Mucosa of descending colon (tissue), 3 donors: ENCODE measurements at regions of chr3 and their contacts with region 1.

Region 1: GRCh38 chr3:4826237-4827100 is 152.8 kb upstream of the BHLHE40 start:
- DNase-seq: peak; percentile 78 to 90 (median 82)
- ATAC-seq: peak; percentile 79
- H3K4me3 ChIP-seq: no peak overlapping the region
- H3K4me1 ChIP-seq: peaks cover 35% of the 10 kb centered on the region
- CTCF ChIP-seq: no peak

Region 2: GRCh38 chr3:4722103-4722502 is 104.4 kb before region 1 on chr3:
- intact Hi-C with region 1: loop called in 1 of 2 experiments (anchors 5 kb)
- DNase-seq: peak in 1 of 3 donors; percentile 64
- ATAC-seq: peak; percentile 81
- H3K4me3 ChIP-seq: no peak overlapping the region
- H3K4me1 ChIP-seq: peaks cover 12% of the 10 kb centered on the region
- CTCF ChIP-seq: no peak

Region 3: GRCh38 chr3:4978204-4978965 is 151.9 kb after region 1 on chr3:
- intact Hi-C with region 1: loop called in 1 of 2 experiments (anchors 5 kb)
- DNase-seq: peak; percentile 97 to 98 (median 97)
- ATAC-seq: peak; percentile 73
- H3K4me3 ChIP-seq: peak overlapping the region; percentile 73
- H3K4me1 ChIP-seq: peaks cover 25% of the 10 kb centered on the region
- CTCF ChIP-seq: no peak